Ovary (tissue), 10 donors: ENCODE measurements at regions of chr6 and their contacts with region 1.

Region 1: DNA sequence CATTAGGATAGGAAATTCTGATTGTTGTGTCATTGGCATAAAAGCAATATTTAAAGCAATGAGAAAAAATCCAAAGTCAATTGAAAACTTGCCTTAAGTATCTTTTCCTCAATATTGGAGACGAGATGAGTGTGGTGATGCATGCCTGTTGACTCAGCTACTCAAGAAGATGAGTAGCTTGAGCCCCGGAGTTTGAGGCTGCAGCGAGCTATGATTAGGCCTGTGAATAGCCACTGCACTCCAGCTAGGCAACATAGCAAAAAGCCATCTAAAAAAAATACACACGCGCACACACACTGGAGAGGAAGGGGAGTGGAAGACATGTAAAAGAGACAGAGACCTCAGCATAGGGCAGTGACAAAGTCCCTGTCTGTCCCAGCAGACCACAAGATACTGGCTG is 9.7 kb upstream of the MARCKS start:
- DNase-seq: no peak
- H3K4me3 ChIP-seq: no peak overlapping the region
- H3K27ac ChIP-seq: no peak overlapping the region
- H3K4me1 ChIP-seq: no peaks in the 10 kb centered on the region
- H3K27me3 ChIP-seq: no peaks in the 10 kb centered on the region
- CTCF ChIP-seq: no peak
- EP300 ChIP-seq: no peak
- POLR2A ChIP-seq: no peak

Region 2: DNA sequence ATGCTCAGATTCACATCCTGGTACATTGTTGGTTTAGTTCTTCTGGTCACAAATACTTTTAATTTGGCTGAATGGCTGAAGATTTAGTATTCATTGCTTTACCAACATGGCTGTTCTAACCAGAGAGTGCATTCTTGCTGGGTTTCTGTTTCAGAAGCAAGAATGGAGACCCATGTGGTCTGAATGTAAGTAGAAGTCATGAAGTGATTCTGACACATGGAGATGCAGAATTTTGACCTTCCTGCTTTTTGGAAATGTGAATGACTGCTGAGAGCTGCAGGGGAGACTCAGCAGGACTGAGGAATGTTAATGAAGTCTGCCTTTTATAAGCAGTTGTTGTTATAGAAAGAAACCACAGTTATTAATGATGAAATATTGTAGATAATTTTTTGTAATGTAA is 566.4 kb before region 1 on chr6:
- intact Hi-C with region 1: loop called in 1 of 4 experiments (anchors 5 kb)
- DNase-seq: no peak
- H3K4me3 ChIP-seq: no peak overlapping the region
- H3K27ac ChIP-seq: no peak overlapping the region
- H3K4me1 ChIP-seq: no peaks in the 10 kb centered on the region
- H3K27me3 ChIP-seq: no peaks in the 10 kb centered on the region
- CTCF ChIP-seq: no peak
- EP300 ChIP-seq: no peak
- POLR2A ChIP-seq: no peak